Calu3 (cell line): ENCODE measurements at regions of chr11 and their contacts with region 1.

Region 1: GRCh38 chr11:6315811-6316425 is 4.4 kb downstream of the CAVIN3 start:
- DNase-seq: peak; percentile 57
- H3K4me3 Mint-ChIP-seq: no peak overlapping the region
- H3K27ac Mint-ChIP-seq: no peak overlapping the region
- H3K4me1 Mint-ChIP-seq: peaks cover 16% of the 10 kb centered on the region
- H3K27me3 Mint-ChIP-seq: no peaks in the 10 kb centered on the region
- CTCF ChIP-seq: peak; percentile 80

Region 2: DNA sequence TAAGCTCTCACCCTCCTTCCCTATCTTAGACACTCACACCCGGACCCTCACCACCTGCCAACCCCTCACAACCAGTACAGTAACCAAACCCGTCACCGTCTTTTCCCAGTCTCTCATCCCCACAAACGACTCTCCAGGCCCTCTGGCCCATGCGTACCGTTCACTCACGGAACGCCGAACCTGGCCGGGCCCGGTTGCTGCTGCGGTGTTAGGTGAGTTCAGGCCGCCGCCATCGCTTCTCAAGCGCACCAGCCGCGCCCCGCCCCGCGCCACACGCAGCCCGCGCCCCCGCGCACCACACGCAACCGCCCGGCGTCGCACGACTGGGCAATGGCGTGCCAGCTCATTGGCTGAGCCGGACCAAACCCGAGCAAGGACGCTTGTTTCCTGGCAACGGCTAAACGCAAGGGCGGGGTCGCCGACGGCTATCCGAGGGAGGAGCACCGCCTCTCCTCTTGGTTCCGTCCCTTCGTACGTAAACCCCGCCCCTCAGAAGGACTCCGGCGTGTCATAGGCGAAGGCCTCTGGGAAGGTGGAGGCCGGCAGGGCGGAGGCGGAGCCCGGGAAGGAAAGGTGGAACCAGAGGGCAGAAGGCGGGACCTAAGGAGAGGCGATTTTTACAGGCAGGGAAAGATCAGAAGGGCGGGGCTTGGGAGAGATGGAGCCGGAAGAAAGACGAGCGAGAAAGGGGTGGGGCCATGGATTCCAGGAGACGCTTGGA is 81.4 kb before region 1 on chr11 and contains the start of gene FHIP1B:
- CTCF ChIA-PET with region 1: no interaction called
- intact Hi-C with region 1: loop called (anchors 2 kb)
- DNase-seq: peak; percentile 99
- H3K4me3 Mint-ChIP-seq: peak within 1 kb of the TSS; percentile 95
- H3K27ac Mint-ChIP-seq: peak within 1 kb of the TSS; percentile 93
- H3K4me1 Mint-ChIP-seq: peaks cover 33% of the 10 kb centered on the region
- H3K27me3 Mint-ChIP-seq: no peaks in the 10 kb centered on the region
- CTCF ChIP-seq: no peak
- total RNA-seq, gene FHIP1B: 39.7 and 43.9 TPM in 2 replicates

Region 3: DNA sequence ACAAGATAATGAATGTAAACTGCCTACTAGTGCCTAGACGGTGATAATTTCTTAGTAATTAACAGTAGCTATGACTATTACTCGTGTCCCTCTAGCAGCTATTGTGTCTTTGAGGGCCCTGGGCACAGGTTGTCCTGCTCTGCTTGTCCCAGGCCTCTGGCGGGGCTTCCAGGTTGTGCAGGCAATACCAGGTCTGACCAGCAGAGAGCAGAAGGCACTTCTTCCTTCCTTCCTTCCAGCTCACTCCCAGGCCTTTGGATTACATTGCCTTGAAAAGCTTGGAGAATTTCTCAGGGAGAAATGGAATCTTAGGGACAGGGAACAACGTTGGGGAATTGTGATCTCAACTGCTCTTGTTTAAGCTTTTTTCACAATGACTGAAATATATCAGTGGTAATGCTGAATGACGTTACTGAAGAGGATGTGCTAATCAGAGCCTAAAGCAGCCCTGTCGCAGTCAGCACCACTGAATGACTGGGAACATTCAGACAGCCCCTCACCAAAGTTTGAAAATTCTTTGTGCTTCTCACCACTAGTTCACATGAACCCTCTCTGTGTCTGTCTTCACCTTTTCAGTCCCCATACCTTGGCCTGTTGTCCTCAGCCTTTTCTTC is 64.7 kb before region 1 on chr11:
- CTCF ChIA-PET with region 1: interaction called, 4 read pairs
- intact Hi-C with region 1: loop called (anchors 2 kb)
- DNase-seq: peak; percentile 83
- H3K4me3 Mint-ChIP-seq: no peak overlapping the region
- H3K27ac Mint-ChIP-seq: no peak overlapping the region
- H3K4me1 Mint-ChIP-seq: no peaks in the 10 kb centered on the region
- H3K27me3 Mint-ChIP-seq: no peaks in the 10 kb centered on the region
- CTCF ChIP-seq: peak; percentile 76